SK-MEL-5 (cell line): ENCODE measurements at regions of chr3 and their contacts with region 1.

Region 1: DNA sequence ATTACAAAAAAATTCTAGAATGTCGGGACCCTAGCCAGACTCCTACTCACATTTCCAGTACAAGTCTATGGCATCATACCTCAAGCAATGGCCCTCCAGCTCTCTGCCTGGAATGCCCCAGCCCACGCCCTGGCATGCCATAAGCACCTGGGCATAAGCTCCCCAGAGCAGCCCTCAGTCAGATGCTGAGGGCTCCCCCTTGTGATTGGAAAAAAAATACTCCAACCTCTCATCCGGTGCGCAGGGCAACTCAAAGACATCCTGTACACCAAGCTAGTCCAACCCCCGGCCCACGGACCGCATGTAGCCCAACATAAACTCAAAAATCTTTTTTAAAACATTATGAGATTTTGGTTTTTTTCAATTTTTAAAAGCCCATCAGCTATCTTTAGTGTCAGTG is 115.4 kb downstream of the NEK10 start:
- DNase-seq: peak; percentile 71

Region 2: DNA sequence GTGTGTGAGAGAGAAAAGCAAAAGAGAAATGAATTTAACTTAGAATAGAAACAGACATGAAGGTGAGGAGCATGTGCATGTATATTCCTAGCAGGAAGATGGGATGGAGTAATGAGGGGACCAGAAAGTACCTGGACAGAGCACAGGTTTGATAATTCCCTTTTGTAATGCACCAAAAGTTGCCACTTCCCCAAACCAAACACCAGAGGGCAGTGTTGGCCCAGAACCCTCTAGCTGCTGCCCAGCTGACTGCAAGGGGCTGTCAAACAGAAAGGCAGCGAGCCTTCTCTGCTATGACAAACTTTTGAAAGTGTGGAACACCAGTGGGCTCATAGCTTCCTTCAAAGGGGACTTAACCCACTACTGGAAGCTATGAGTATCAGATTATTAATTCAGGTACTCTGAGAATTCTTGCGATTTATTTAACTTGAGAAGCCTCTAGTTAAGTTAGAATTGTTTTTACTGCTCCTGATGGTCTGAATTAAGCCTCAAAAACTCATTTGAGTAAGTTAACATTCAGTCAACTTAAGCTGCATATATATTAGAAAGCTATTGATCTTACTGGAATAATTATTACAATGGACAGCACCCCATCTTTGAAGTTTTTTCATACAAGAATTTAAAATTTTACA is 119.5 kb before region 1 on chr3:
- in situ Hi-C with region 1: loop called (anchors 25 kb)
- DNase-seq: peak; percentile 80

Region 3: DNA sequence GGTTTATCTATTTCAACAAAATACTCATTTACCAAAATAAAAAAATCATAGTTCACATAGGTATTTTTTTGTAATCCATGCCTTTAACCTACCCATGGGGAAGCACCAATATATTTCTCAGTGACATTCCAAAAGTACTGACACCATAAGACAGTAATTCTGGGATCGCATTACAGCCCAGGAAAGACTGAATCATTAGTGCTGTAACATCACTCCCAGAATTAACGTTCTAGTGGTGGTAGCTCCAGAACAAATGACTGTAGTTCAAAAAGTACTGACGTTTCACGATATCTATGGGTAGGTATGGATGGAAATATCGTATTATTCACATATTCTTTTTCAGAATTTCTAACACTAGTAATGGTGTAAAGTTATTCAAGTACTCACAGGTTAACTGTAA is 169.6 kb after region 1 on chr3:
- in situ Hi-C with region 1: no loop called
- DNase-seq: no peak